Breast epithelium (tissue), 4 donors: ENCODE measurements at regions of chr7 and their contacts with region 1.

Region 1: GRCh38 chr7:72286519-72286918 is 125.6 kb downstream of the CALN1 start:
- DNase-seq: no peak
- H3K4me3 ChIP-seq: no peak overlapping the region
- H3K27ac ChIP-seq: no peak overlapping the region
- H3K4me1 ChIP-seq: no peaks in the 10 kb centered on the region
- H3K27me3 ChIP-seq: no peaks in the 10 kb centered on the region
- CTCF ChIP-seq: no peak
- POLR2A ChIP-seq: no peak

Region 2: DNA sequence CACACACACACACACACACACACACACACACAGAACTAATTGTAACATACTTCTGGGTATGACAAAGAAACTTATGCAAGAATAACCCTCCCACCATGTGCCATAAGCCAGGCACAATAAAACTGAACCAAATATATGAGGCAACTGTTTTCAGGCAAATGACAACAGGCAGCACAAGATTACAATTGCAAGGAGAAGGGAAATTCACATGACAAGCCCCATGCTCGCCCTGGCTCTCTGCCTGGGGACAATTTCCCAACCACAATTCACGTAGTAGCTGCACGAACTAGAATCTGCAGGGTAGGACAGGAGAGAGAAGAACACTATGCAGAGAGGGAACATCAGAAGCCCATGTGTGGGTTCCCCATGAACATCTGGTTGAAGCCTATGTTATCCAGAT is 17.7 kb before region 1 on chr7:
- intact Hi-C with region 1: loop called (anchors 1 kb)
- DNase-seq: no peak
- H3K4me3 ChIP-seq: no peak overlapping the region
- H3K27ac ChIP-seq: no peak overlapping the region
- H3K4me1 ChIP-seq: no peaks in the 10 kb centered on the region
- H3K27me3 ChIP-seq: no peaks in the 10 kb centered on the region
- CTCF ChIP-seq: no peak
- POLR2A ChIP-seq: no peak

Region 3: DNA sequence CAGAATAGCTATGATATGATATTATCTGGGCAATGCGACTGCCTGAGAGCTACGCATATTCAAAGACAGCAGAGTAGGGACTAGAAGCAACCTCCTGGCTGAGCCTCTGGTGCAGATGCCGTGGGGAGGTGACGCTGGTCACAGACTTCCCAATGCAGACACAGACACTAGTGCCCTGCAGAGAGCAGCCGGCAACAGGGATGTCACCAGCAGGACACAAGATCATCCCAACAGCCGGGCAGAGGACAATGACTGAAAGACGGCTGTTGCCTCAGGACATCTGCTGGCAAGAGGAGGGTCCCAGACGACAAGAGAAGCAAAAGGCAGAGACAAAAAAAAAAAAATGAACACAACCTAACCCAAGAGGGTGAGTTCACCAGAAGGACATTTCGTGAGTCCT is 21.0 kb after region 1 on chr7:
- intact Hi-C with region 1: loop called (anchors 2 kb)
- DNase-seq: no peak
- H3K4me3 ChIP-seq: no peak overlapping the region
- H3K27ac ChIP-seq: no peak overlapping the region
- H3K4me1 ChIP-seq: no peaks in the 10 kb centered on the region
- H3K27me3 ChIP-seq: no peaks in the 10 kb centered on the region
- CTCF ChIP-seq: no peak
- POLR2A ChIP-seq: no peak